ENCODE measurements at regions of chr5 and their contacts with region 1.

Region 1: DNA sequence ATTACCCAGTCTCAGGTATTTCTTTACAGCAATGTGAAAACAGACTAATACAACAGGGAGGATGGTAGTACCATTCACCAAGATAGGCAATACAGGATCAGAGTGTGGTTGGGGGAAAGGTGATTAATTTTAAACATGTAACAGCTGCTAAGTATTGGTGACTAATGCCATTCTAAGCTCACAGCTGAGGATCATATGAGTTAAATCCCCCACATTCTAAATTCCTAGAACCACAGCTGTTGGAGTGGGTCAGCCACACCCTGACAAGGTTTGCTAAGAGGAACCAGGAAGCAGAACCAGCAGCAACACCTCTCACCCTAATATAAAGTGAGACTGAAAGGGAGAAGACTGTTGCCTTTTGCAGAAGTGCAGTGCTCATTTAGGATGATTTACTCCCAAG is 24.8 kb downstream of the HSPB3 start:
- DNase-seq: no peak
- ATAC-seq: no peak
- H3K4me3 ChIP-seq: no peak overlapping the region
- H3K4me3 Mint-ChIP-seq: no peak overlapping the region
- H3K27ac ChIP-seq: no peak overlapping the region
- H3K27ac Mint-ChIP-seq: no peak overlapping the region
- H3K4me1 ChIP-seq: no peaks in the 10 kb centered on the region
- H3K4me1 Mint-ChIP-seq: no peaks in the 10 kb centered on the region
- H3K27me3 ChIP-seq: no peaks in the 10 kb centered on the region
- H3K27me3 Mint-ChIP-seq: peaks cover 19% of the 10 kb centered on the region
- CTCF ChIP-seq: no peak

Region 2: DNA sequence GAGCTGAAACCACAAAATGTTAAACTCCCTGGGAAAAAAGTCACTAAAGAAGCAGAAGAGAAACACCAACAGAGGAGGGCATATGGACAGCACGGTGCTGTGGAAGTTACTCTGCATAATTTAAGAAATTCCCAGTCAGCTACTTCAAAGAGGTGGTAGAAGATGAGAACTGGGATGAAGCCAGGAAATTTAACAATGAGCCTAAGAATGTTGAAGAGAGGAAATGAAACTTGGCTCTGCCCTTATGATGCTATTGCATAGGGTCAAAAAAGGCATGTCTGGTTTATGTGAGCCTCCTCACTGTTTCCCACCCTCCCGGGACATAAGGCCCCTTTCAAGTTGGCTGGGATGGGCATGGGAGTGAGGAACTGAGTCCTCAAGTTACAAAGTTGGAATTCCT is 11.9 kb after region 1 on chr5:
- CTCF ChIA-PET with region 1: interaction called, 11 read pairs
- POLR2A ChIA-PET with region 1: interaction called, 3 read pairs
- intact Hi-C with region 1: no loop called
- DNase-seq: no peak
- ATAC-seq: no peak
- H3K4me3 ChIP-seq: no peak overlapping the region
- H3K4me3 Mint-ChIP-seq: no peak overlapping the region
- H3K27ac ChIP-seq: no peak overlapping the region
- H3K27ac Mint-ChIP-seq: no peak overlapping the region
- H3K4me1 ChIP-seq: no peaks in the 10 kb centered on the region
- H3K4me1 Mint-ChIP-seq: peaks cover 3% of the 10 kb centered on the region
- H3K27me3 ChIP-seq: peaks cover 3 to 4% of the 10 kb centered on the region in 2 experiments
- H3K27me3 Mint-ChIP-seq: peaks cover 8% of the 10 kb centered on the region
- CTCF ChIP-seq: no peak

Region 3: GRCh38 chr5:55636683-55637082 is 1156.4 kb after region 1 on chr5:
- CTCF ChIA-PET with region 1: no interaction called
- POLR2A ChIA-PET with region 1: no interaction called
- intact Hi-C with region 1: no loop called
- DNase-seq: no peak
- ATAC-seq: no peak
- H3K4me3 ChIP-seq: no peak overlapping the region
- H3K4me3 Mint-ChIP-seq: no peak overlapping the region
- H3K27ac ChIP-seq: no peak overlapping the region
- H3K27ac Mint-ChIP-seq: no peak overlapping the region
- H3K4me1 ChIP-seq: no peaks in the 10 kb centered on the region
- H3K4me1 Mint-ChIP-seq: peaks cover 9% of the 10 kb centered on the region
- H3K27me3 ChIP-seq: no peaks in the 10 kb centered on the region
- H3K27me3 Mint-ChIP-seq: no peaks in the 10 kb centered on the region
- CTCF ChIP-seq: no peak